CD8-positive, alpha-beta memory T cell (primary cell): ENCODE measurements at regions of chr15 and their contacts with region 1.

Region 1: DNA sequence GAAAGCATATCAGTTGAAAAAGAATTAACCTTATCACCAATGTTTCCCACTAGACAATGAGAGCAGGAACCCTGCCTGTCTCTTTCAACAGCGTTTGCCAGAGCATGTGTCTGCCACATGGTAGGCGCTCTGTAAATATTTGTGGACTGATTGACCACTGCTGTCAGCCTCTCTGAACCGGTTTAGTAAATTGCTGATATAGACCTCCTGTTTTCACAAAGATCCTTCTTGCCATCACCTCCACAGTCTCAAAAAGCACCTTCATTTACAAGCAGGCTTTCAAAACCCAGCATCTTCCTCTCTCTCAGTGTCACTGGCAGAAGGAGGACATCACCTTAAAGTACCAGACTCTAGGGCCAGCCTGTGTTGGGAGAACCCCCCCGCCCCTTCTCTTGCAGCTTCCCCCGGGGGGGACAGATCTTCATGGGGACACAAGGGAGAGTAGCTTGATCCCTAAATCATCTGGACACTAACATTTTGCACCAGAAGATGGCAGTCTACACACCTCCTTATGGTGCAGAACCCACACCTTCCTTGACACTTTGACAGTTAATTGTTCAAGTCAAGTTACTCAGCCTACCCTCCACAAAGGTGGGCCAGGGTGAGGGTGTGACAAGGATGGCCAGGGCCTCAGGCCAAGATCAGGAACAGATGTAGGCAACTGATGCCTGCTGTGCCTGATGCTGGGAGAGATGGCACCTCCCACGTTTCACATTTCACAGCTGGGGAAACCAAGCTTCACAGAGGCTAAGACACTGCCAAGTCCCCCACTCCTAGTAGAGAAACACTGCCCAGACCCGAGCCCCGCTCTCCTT is 37.8 kb upstream of the USP3 start:
- DNase-seq: peak in 4 of 5 donors; percentile 18 to 78 (median 66)
- H3K4me3 ChIP-seq: no peak overlapping the region
- H3K4me3 Mint-ChIP-seq: no peak overlapping the region
- H3K27ac ChIP-seq: no peak overlapping the region
- H3K27ac Mint-ChIP-seq: peak overlapping the region in 5 of 8 donors; percentile 24 to 77 (median 70)
- H3K4me1 ChIP-seq: peaks cover 10% of the 10 kb centered on the region
- H3K4me1 Mint-ChIP-seq: peaks cover 8 to 26% (median 17%) of the 10 kb centered on the region in 3 donors
- H3K27me3 ChIP-seq: no peaks in the 10 kb centered on the region
- H3K27me3 Mint-ChIP-seq: peaks cover 4 to 5% of the 10 kb centered on the region in 2 donors

Region 2: DNA sequence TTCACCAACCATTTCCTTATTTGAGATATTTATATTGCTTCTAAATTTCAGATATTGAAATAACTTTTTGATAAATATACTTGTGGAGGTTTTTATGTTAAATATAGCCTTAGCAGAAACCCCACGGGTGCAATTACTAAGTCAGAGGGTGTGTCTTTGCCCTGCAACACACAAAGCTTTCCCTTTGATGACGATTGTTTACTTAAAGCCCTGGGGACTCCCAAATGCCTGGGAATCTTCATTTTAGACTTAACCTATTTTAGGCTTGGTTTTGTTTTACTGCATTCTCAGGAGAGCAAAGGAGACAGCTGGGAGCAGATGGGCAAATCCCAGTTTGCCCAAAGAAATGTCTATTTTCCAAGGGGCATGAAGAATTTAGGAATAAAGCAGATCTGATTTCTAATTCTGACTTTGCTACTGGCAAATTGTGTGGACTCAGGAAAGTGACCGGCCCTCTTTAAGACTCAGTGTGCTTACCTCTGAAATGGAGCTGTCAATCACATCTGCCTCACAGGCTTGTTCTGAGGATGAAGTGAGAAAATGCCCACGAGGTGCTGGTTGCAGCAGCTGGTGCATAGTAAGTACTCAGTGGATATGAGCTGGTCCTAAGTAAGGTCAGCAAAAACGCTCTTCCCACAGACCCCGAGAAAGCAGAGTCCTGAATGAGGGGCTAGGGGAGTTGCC is 35.7 kb before region 1 on chr15:
- CTCF ChIA-PET with region 1: no interaction called
- POLR2A ChIA-PET with region 1: no interaction called
- DNase-seq: no peak
- H3K4me3 ChIP-seq: no peak overlapping the region
- H3K4me3 Mint-ChIP-seq: no peak overlapping the region
- H3K27ac ChIP-seq: no peak overlapping the region
- H3K27ac Mint-ChIP-seq: no peak overlapping the region
- H3K4me1 ChIP-seq: no peaks in the 10 kb centered on the region
- H3K4me1 Mint-ChIP-seq: no peaks in the 10 kb centered on the region
- H3K27me3 ChIP-seq: no peaks in the 10 kb centered on the region
- H3K27me3 Mint-ChIP-seq: peaks cover 8 to 9% of the 10 kb centered on the region in 2 donors

Region 3: DNA sequence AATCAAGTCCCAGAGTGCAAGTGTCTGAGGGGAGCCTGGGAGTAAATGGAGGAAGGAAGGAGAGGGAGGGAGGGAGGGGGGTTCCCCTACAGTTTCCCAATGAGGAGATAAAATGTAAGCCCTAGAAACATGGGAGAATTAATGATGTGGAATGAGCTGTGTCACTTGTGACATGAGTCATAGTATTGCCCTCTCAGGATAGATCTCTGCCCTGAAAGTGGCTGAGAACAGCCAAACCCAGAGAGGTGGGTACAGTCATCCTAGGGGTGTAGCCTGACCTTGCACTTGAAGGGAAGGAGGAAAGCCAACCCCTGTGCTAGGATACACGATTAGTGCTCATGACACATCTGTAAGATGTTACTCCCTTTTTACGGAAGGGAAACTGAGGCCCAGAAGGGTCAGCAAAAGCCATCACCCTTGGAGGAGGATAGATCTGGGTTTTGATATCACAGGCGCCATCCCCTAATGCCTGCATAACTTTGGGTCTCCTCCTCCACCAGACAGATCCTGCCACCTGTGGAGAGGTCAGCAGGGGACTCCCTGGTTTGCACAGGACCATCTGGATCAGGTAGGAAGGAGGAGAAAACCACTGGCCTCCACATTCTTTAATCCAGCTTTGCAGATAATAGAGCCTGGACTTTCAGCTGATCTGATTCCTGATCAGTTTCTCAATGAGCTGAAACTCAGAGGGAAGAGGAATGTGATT is 14.7 kb after region 1 on chr15:
- CTCF ChIA-PET with region 1: interaction called, 31 read pairs
- POLR2A ChIA-PET with region 1: no interaction called
- DNase-seq: no peak
- H3K4me3 ChIP-seq: no peak overlapping the region
- H3K4me3 Mint-ChIP-seq: peak overlapping the region in 2 of 7 donors; percentile 10 to 72
- H3K27ac ChIP-seq: no peak overlapping the region
- H3K27ac Mint-ChIP-seq: peak overlapping the region; percentile 90 to 100 (median 99)
- H3K4me1 ChIP-seq: peaks cover 80% of the 10 kb centered on the region
- H3K4me1 Mint-ChIP-seq: peaks cover 54 to 76% (median 75%) of the 10 kb centered on the region in 3 donors
- H3K27me3 ChIP-seq: no peaks in the 10 kb centered on the region
- H3K27me3 Mint-ChIP-seq: no peaks in the 10 kb centered on the region

Region 4: DNA sequence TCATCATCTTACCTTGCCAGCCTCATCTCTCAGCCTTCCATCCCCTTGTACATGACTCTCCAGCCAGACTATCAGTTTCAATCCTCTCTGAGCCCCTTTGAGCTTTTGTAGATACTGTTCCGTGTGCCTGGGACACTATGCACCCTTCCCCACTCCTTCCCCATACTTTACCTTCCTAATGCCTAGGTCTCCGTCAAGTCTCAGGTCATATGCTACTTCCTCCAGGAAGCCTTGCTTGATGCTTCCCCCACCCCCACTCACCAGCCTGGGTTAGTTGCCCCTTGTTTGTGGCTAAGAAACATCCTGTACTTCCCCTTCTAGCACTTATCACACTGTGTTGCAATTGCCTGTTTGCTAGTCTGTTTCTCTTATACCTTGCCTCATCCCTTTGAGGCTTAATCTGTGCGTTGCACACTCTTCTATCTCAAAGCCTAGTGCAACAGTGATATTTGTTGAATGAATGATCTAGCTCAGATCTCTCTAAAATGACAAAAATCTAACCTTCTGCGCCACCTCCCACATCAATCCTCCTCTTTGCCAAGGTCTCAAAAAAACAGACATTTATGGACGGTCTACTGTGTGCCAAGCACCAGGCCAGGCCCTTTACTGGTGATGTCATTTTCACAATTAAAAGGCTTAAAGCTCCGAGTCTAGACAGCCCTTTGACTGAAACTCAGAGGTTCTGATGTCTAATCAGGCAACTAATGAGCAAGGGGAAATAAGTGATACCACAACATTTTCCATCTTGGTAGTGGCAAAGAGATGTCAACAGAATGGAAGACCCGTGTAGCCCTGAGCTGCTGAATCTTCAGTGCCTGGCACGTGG is 31.3 kb after region 1 on chr15:
- CTCF ChIA-PET with region 1: interaction called, 15 read pairs
- POLR2A ChIA-PET with region 1: no interaction called
- DNase-seq: peak; percentile 69 to 91 (median 85)
- H3K4me3 ChIP-seq: peak overlapping the region; percentile 23
- H3K4me3 Mint-ChIP-seq: no peak overlapping the region
- H3K27ac ChIP-seq: peak overlapping the region; percentile 55
- H3K27ac Mint-ChIP-seq: no peak overlapping the region
- H3K4me1 ChIP-seq: peaks cover 95% of the 10 kb centered on the region
- H3K4me1 Mint-ChIP-seq: peaks cover 59 to 76% (median 76%) of the 10 kb centered on the region in 3 donors
- H3K27me3 ChIP-seq: no peaks in the 10 kb centered on the region
- H3K27me3 Mint-ChIP-seq: no peaks in the 10 kb centered on the region

Region 5: DNA sequence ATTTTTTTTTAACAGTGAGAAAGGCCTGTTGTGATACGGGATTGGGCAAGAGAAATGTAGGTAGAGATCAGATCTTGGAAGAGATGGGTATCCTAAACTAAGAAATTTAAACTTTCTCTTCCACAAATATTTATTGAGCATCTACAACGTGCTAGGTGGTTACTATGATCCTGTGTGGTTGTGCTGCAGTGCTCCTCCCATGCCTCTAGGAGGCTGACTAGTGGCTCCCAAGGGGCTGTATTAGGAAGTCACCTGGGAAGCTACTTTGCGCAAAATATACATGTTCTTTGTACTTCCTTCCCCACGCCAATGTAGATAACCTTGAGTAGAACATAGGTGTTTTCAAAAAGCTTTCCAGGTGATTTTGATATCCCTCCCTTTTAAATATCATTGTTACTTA is 65.0 kb after region 1 on chr15:
- CTCF ChIA-PET with region 1: interaction called, 12 read pairs
- POLR2A ChIA-PET with region 1: no interaction called
- DNase-seq: no peak
- H3K4me3 ChIP-seq: no peak overlapping the region
- H3K4me3 Mint-ChIP-seq: no peak overlapping the region
- H3K27ac ChIP-seq: no peak overlapping the region
- H3K27ac Mint-ChIP-seq: peak overlapping the region in 7 of 8 donors; percentile 12 to 55 (median 47)
- H3K4me1 ChIP-seq: peaks cover 66% of the 10 kb centered on the region
- H3K4me1 Mint-ChIP-seq: peaks cover 90 to 96% (median 95%) of the 10 kb centered on the region in 3 donors
- H3K27me3 ChIP-seq: no peaks in the 10 kb centered on the region
- H3K27me3 Mint-ChIP-seq: no peaks in the 10 kb centered on the region

Region 6: GRCh38 chr15:63610200-63610841 is 143.7 kb after region 1 on chr15:
- CTCF ChIA-PET with region 1: interaction called, 16 read pairs
- POLR2A ChIA-PET with region 1: interaction called, 5 read pairs
- DNase-seq: peak; percentile 51 to 80 (median 63)
- H3K4me3 ChIP-seq: no peak overlapping the region
- H3K4me3 Mint-ChIP-seq: peak overlapping the region in 6 of 7 donors; percentile 1 to 78 (median 29)
- H3K27ac ChIP-seq: no peak overlapping the region
- H3K27ac Mint-ChIP-seq: peak overlapping the region; percentile 70 to 96 (median 92)
- H3K4me1 ChIP-seq: peaks cover 31% of the 10 kb centered on the region
- H3K4me1 Mint-ChIP-seq: peaks cover 40 to 52% (median 41%) of the 10 kb centered on the region in 3 donors
- H3K27me3 ChIP-seq: no peaks in the 10 kb centered on the region
- H3K27me3 Mint-ChIP-seq: peaks cover 0 to 2% of the 10 kb centered on the region in 2 donors